PC-9 (cell line): ENCODE measurements at regions of chr18 and their contacts with region 1.

Region 1: GRCh38 chr18:57209713-57210661 is 63.1 kb downstream of the BOD1L2 start:
- DNase-seq: peak; percentile 73 to 94
- H3K4me3 ChIP-seq: peak overlapping the region; percentile 21; the same call in 1 of the 2 replicates
- H3K27ac ChIP-seq: peak overlapping the region; percentile 95
- H3K4me1 ChIP-seq: peaks cover 58% of the 10 kb centered on the region
- H3K27me3 ChIP-seq: no peaks in the 10 kb centered on the region
- CTCF ChIP-seq: no peak

Region 2: DNA sequence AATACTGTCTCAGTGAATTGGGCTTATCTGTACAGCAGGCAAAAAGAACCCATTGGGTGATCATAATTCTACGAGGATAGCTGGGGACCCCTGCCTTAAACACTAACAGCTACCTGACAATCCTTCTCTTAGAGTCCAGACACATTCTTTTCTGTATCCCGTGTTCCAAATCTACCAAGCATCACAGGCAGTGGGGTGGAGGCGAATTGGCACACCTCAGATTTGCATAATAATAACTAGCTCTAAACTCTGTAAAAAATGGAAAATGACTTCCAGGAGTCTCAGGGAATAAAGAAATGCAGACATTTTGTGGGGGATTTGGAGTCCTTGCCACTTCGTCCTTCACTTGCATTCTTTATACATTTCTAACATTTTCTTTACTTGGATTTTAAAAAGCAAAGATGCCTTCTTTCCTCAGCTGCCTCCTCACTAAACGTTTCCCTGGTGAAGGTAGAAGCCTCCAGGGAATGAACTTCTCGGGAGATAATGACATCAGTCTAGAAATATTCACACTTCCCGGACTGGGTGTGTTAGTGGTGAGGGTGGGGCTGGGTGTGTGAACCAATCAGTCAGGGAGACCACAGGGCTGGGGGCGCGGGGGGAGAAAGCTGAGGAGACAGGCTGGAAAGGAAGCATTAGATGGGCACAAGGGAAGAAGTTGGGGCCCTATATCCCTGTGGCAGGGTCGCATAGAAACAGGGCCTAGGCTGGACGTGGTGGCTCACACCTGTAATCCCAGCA is 122.2 kb before region 1 on chr18:
- CTCF ChIA-PET with region 1: no interaction called
- POLR2A ChIA-PET with region 1: no interaction called
- intact Hi-C with region 1: loop called (anchors 1 kb)
- DNase-seq: peak; percentile 46 to 75
- H3K4me3 ChIP-seq: no peak overlapping the region
- H3K27ac ChIP-seq: peak overlapping the region; percentile 51
- H3K4me1 ChIP-seq: peaks cover 33% of the 10 kb centered on the region
- H3K27me3 ChIP-seq: no peaks in the 10 kb centered on the region
- CTCF ChIP-seq: no peak

Region 3: GRCh38 chr18:57175550-57175949 is 34.4 kb before region 1 on chr18:
- CTCF ChIA-PET with region 1: no interaction called
- POLR2A ChIA-PET with region 1: no interaction called
- intact Hi-C with region 1: no loop called
- DNase-seq: peak in 1 of 2 experiments; percentile 47
- H3K4me3 ChIP-seq: no peak overlapping the region
- H3K27ac ChIP-seq: peak overlapping the region; percentile 58
- H3K4me1 ChIP-seq: peaks cover 15% of the 10 kb centered on the region
- H3K27me3 ChIP-seq: no peaks in the 10 kb centered on the region
- CTCF ChIP-seq: no peak

Region 4: GRCh38 chr18:57434536-57435494 is 224.8 kb after region 1 on chr18 and contains the start of gene ONECUT2:
- CTCF ChIA-PET with region 1: no interaction called
- POLR2A ChIA-PET with region 1: no interaction called
- intact Hi-C with region 1: loop called (anchors 10 kb)
- DNase-seq: peak; percentile 86 to 91
- H3K4me3 ChIP-seq: peak within 1 kb of the TSS; percentile 90
- H3K27ac ChIP-seq: no peak within 1 kb of the TSS
- H3K4me1 ChIP-seq: peaks cover 24% of the 10 kb centered on the region
- H3K27me3 ChIP-seq: no peaks in the 10 kb centered on the region
- CTCF ChIP-seq: no peak
- total RNA-seq, gene ONECUT2: 0.35 and 0.40 TPM in 2 replicates

Region 5: DNA sequence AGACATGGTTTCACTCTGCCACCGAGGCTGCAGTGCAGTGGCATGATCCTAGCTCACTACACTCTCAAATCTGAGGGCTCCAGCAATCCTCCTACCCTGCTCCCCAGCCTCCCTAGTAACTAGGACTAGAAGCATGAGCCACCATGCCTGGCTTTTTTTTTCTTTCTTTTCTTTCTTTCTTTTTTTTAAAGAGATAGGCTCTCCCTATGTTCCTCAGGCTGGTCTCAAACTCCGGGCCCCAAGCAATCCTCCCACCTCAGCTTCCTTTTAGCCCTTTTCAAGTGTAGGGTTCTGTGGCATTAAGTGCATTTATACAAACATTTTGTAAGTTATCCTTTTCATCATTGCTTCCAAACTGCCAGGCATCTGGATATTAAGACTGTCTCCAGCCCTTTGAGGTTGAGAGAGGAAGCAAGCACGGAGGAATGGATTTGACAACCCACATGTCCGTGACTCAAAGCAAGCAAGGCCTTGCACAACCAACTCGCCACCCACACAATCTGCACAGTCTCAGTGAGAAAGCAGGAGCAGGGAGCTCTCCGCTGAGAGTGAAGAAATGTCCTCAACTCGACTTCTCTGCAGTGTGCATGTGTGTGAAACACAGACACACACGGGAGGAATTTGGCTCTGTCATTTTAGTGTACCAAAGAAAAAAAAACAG is 527.5 kb after region 1 on chr18:
- CTCF ChIA-PET with region 1: interaction called, 10 read pairs
- POLR2A ChIA-PET with region 1: no interaction called
- intact Hi-C with region 1: no loop called
- DNase-seq: peak in 1 of 2 experiments; percentile 87
- H3K4me3 ChIP-seq: no peak overlapping the region
- H3K27ac ChIP-seq: peak overlapping the region; percentile 38; the same call in 1 of the 2 replicates
- H3K4me1 ChIP-seq: peaks cover 14% of the 10 kb centered on the region
- H3K27me3 ChIP-seq: no peaks in the 10 kb centered on the region
- CTCF ChIP-seq: no peak